PC-3 (cell line): ENCODE measurements at regions of chr1 and their contacts with region 1.

Region 1: GRCh38 chr1:27365372-27366112 is 1.2 kb downstream of the MAP3K6 start:
- DNase-seq: peak; percentile 79
- ATAC-seq: peak; percentile 61
- H3K4me3 ChIP-seq: peak overlapping the region; percentile 89
- H3K27ac ChIP-seq: peak overlapping the region; percentile 55
- H3K4me1 ChIP-seq: peaks cover 13% of the 10 kb centered on the region
- H3K27me3 ChIP-seq: no peaks in the 10 kb centered on the region
- CTCF ChIP-seq: no peak

Region 2: DNA sequence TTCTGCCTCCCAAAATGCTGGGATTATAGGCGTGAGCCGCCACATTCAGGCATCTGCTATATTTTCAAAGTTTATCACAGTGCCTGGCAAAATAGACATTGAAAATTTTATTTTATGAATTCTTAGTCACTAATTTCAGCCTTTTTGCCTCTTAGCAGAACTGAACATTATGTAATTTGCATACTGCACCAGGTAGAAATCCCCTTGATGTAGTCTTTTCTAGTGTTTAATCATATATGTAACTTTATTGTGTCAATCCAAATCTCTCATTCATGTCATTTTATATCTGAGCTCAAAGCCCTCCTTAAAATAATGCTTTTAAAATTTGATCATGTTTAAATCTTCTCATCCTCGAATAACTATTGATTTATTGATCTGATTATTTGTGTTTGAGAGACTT is 111.9 kb before region 1 on chr1:
- CTCF ChIA-PET with region 1: interaction called, 16 read pairs
- POLR2A ChIA-PET with region 1: no interaction called
- intact Hi-C with region 1: no loop called
- DNase-seq: no peak
- ATAC-seq: no peak
- H3K4me3 ChIP-seq: no peak overlapping the region
- H3K27ac ChIP-seq: no peak overlapping the region
- H3K4me1 ChIP-seq: no peaks in the 10 kb centered on the region
- H3K27me3 ChIP-seq: no peaks in the 10 kb centered on the region
- CTCF ChIP-seq: no peak

Region 3: GRCh38 chr1:27321813-27322577 is 43.5 kb before region 1 on chr1 and contains the start of gene TMEM222:
- CTCF ChIA-PET with region 1: interaction called, 3 read pairs
- POLR2A ChIA-PET with region 1: interaction called, 3 read pairs
- intact Hi-C with region 1: loop called (anchors 2 kb)
- DNase-seq: peak; percentile 96
- ATAC-seq: peak; percentile 95
- H3K4me3 ChIP-seq: peak within 1 kb of the TSS; percentile 99
- H3K27ac ChIP-seq: peak within 1 kb of the TSS; percentile 71
- H3K4me1 ChIP-seq: peaks cover 12% of the 10 kb centered on the region; the same call in 1 of the 2 replicates
- H3K27me3 ChIP-seq: no peaks in the 10 kb centered on the region
- CTCF ChIP-seq: no peak
- total RNA-seq, gene TMEM222: 50.3 and 57.4 TPM in 2 replicates

Region 4: DNA sequence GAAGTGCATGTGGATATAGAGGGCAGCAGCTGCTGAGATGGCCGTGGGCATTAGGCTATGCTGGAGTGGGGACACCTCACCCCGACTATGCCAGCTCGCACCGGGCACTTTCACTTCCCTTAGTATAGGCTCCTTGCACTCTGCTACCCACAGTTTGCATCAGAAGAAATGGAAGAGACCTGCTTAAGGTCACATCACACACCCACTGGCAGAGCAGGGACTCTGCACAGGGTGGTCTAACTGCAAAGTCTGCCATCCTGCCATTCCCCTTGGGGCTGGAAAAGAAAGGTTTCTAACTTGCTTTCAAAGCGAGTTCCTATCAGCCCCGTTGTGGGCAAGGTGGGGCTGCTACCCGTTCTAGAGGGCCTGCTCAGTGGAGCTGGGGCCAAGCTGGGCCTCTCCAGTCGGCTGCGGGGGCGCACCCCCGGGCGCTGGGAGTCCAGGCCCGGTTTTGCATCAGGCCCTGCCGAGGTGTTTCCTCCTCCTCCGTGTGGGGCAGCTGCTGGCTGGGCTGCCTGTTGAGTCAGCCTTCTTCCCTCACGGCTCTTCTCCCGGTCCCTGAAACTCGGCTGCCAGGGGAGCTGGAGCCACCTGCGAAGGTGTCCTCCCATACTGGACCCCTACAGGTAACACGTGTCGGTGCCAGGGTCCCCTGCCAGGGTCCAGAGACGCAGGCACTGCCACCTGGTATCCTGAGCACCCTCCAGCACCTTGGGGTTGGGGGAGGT is 23.9 kb before region 1 on chr1 and contains the start of gene SYTL1:
- CTCF ChIA-PET with region 1: interaction called, 5 read pairs
- POLR2A ChIA-PET with region 1: interaction called, 21 read pairs
- intact Hi-C with region 1: no loop called
- DNase-seq: peak; percentile 86
- ATAC-seq: peak; percentile 72
- H3K4me3 ChIP-seq: peak within 1 kb of the TSS; percentile 79
- H3K27ac ChIP-seq: peak within 1 kb of the TSS; percentile 88
- H3K4me1 ChIP-seq: peaks cover 37% of the 10 kb centered on the region
- H3K27me3 ChIP-seq: no peaks in the 10 kb centered on the region
- CTCF ChIP-seq: no peak
- total RNA-seq, gene SYTL1: 26.8 and 34.3 TPM in 2 replicates

Region 5: GRCh38 chr1:27392096-27392777 is 26.7 kb after region 1 on chr1 and contains the start of gene GPR3:
- CTCF ChIA-PET with region 1: interaction called, 5 read pairs
- POLR2A ChIA-PET with region 1: no interaction called
- intact Hi-C with region 1: loop called (anchors 2 kb)
- DNase-seq: peak; percentile 94
- ATAC-seq: peak; percentile 82
- H3K4me3 ChIP-seq: peak within 1 kb of the TSS; percentile 100
- H3K27ac ChIP-seq: peak within 1 kb of the TSS; percentile 64
- H3K4me1 ChIP-seq: peaks cover 25% of the 10 kb centered on the region
- H3K27me3 ChIP-seq: no peaks in the 10 kb centered on the region
- CTCF ChIP-seq: peak; percentile 65
- total RNA-seq, gene GPR3: 4.7 TPM in 2 replicates